Endothelial cell of umbilical vein (primary cell): ENCODE measurements at regions of chr22 and their contacts with region 1.

Region 1: DNA sequence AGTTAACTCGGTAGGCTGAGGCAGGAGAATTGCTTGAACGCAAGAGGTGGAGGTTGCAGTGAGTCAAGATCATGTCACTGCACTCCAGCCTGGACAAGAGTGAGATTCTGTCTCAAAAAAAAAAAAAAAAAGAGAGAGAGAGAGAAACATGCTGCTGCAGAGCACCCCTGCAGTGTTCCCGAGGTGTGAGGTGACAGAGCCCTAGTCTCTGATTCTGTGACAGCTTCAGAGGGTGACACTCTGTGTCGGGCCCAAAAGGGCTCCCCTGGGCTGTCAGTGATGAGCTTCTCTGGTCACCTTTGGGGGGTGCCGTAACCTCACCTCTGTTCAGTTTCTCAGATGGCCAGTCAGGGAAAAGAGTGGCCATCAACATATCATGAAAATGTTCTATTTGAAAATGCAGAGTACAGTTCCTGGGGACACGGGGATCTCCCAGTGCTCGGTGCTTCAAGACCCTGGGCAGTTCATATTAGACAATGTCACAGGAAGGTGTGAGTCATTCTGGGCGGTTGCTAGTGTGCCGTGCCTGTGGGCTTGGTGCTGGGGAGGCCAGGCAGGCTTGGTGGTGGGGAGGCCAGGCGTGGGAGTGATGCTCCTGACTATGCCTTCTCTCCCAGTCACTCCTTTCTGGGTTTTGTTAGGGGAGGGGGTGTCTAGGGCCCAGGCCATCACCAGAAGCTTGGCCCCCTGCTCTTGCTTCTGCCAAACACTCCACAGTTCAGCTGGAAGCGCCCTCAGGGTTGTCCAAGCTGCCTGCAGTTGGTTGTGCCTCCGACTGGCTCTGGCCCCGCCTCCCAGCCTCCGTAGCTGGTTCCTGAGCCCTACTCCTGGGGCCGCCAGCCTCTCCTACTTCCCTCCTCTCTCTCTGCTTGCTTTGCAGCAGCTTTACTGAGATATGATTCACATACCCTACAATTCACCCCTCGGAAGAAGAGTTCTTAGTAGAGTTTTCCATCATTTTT is 52.5 kb upstream of the CLDN5 start:
- DNase-seq: peak; percentile 90
- H3K4me3 ChIP-seq: no peak overlapping the region
- H3K27ac ChIP-seq: peak overlapping the region; percentile 75
- H3K4me1 ChIP-seq: peaks cover 47% of the 10 kb centered on the region
- H3K27me3 ChIP-seq: no peaks in the 10 kb centered on the region
- CTCF ChIP-seq: no peak
- POLR2A ChIP-seq: peak; percentile 70

Region 2: DNA sequence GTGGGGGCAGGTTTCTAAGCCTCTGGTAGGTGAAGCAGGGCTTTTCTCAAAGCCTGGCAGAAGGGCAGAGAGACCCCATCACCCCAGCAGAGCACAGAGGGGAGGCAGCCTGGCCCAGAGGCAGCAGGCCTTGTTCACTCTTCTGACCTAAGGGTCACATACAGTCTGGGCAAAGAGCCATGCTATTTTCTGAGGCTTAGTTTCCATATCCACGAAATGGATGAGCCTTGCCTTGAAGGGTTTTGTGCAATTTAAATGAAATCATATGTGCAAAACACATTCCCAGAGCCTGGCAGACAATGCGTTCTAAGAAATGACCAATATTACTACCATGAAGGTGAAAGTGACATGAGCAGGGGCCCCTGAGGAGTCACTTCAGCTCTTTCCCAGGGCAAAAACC is 189.7 kb before region 1 on chr22:
- CTCF ChIA-PET with region 1: no interaction called
- POLR2A ChIA-PET with region 1: no interaction called
- dilution Hi-C with region 1: no loop called
- intact Hi-C with region 1: no loop called
- DNase-seq: no peak
- H3K4me3 ChIP-seq: no peak overlapping the region
- H3K27ac ChIP-seq: no peak overlapping the region
- H3K4me1 ChIP-seq: no peaks in the 10 kb centered on the region
- H3K27me3 ChIP-seq: no peaks in the 10 kb centered on the region
- CTCF ChIP-seq: no peak
- POLR2A ChIP-seq: no peak

Region 3: DNA sequence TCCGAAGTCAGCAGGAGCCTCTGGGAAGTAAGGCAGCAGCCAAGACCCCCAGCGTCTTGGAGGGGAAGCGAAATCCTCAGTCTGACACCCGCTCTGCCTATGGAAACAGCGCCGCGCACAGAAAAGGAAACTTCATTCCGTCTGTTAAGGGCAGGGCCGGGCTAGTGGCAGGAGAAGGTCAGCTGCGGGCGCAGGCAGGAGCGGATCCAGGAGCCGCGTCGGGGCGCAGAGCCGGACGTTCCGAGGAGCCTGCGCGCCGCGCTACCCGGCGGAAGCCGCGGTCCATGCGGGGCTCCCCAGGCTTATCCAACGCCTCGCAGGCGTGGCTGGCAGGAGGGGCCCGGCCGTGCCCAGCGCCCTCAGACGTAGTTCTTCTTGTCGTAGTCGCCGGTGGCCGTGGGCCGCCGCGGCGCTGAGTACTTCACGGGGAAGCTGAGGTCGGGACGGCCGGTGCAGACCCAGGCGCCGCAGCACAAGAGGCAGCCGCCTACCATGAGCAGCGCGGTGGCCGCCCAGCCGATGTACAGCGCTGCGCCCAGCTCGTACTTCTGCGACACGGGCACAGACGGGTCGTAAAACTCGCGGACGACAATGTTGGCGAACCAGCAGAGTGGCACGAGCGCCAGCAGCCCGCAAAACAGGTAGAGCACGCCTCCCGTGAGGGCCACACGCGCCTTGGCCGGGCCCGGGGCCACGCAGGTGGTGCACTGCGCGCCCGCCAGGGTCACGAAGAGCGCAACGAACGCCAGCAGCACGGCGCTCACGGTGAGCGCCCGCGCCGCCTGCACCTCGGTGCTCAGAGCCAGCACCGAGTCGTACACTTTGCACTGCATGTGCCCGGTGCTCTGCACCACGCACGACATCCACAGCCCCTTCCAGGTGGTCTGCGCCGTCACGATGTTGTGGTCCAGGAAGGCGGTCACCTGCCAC is 53.2 kb before region 1 on chr22:
- CTCF ChIA-PET with region 1: interaction called, 12 read pairs
- POLR2A ChIA-PET with region 1: interaction called, 5 read pairs
- dilution Hi-C with region 1: no loop called
- intact Hi-C with region 1: loop called (anchors 1 kb)
- DNase-seq: peak; percentile 60
- H3K4me3 ChIP-seq: peak overlapping the region; percentile 53 to 75 (median 61)
- H3K27ac ChIP-seq: peak overlapping the region; percentile 55
- H3K4me1 ChIP-seq: peaks cover 44% of the 10 kb centered on the region
- H3K27me3 ChIP-seq: no peaks in the 10 kb centered on the region
- CTCF ChIP-seq: no peak
- POLR2A ChIP-seq: peak; percentile 48

Region 4: GRCh38 chr22:19543970-19544708 is 32.6 kb before region 1 on chr22:
- CTCF ChIA-PET with region 1: no interaction called
- POLR2A ChIA-PET with region 1: no interaction called
- dilution Hi-C with region 1: no loop called
- intact Hi-C with region 1: no loop called
- DNase-seq: no peak
- H3K4me3 ChIP-seq: no peak overlapping the region
- H3K27ac ChIP-seq: no peak overlapping the region
- H3K4me1 ChIP-seq: no peaks in the 10 kb centered on the region
- H3K27me3 ChIP-seq: no peaks in the 10 kb centered on the region
- CTCF ChIP-seq: no peak
- POLR2A ChIP-seq: no peak

Region 5: GRCh38 chr22:19554834-19555404 is 21.8 kb before region 1 on chr22:
- CTCF ChIA-PET with region 1: interaction called, 10 read pairs
- POLR2A ChIA-PET with region 1: no interaction called
- dilution Hi-C with region 1: no loop called
- intact Hi-C with region 1: no loop called
- DNase-seq: peak; percentile 73
- H3K4me3 ChIP-seq: no peak overlapping the region
- H3K27ac ChIP-seq: no peak overlapping the region
- H3K4me1 ChIP-seq: peaks cover 7% of the 10 kb centered on the region
- H3K27me3 ChIP-seq: no peaks in the 10 kb centered on the region
- CTCF ChIP-seq: peak; percentile 13 to 34
- POLR2A ChIP-seq: no peak

Region 6: DNA sequence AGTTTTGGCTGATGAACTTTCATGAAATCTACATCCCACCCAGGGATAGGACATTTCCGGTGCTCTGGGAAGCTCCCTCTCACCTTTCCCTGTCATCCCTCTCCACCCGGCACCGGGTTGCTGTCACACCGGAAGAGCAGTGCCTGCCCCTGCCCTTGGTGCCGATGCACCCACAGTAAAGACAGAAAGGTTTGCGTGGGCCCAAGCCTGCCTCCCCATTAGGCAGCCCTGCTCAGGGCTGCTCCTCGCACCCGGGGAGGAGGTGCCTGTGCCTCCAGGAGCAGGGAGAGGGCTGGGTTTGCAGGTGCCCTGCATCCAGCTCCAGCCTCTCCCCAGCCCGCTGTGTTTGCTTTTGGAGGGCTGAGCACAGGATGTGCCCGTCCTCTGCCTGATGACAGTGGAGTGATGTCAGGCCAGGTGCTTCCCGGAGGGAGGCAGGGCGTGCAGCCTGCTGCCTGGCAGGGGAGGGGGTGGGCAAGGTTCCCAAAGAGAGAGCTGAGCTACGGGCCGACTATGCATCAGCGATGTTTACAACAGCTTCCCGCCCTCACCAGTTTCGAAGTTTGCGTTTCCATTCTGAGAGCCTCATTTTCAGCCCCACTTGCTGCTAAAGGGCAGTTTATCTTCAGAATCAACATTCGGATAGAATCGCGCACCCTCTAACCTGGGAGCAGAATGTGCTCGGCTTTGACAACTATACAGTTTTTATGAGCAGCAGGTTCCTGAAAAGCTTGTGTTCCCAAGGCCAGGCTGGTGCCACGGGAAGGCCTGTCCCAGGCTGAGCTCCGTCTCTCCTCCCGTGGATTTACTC is 30.7 kb after region 1 on chr22:
- CTCF ChIA-PET with region 1: interaction called, 5 read pairs
- POLR2A ChIA-PET with region 1: no interaction called
- dilution Hi-C with region 1: no loop called
- intact Hi-C with region 1: loop called (anchors 1 kb)
- DNase-seq: peak; percentile 74
- H3K4me3 ChIP-seq: no peak overlapping the region
- H3K27ac ChIP-seq: no peak overlapping the region
- H3K4me1 ChIP-seq: peaks cover 2% of the 10 kb centered on the region
- H3K27me3 ChIP-seq: no peaks in the 10 kb centered on the region
- CTCF ChIP-seq: no peak
- POLR2A ChIP-seq: no peak

Region 7: GRCh38 chr22:19619144-19620009 is 42.6 kb after region 1 on chr22:
- CTCF ChIA-PET with region 1: no interaction called
- POLR2A ChIA-PET with region 1: no interaction called
- dilution Hi-C with region 1: no loop called
- intact Hi-C with region 1: loop called (anchors 5 kb)
- DNase-seq: peak; percentile 33
- H3K4me3 ChIP-seq: no peak overlapping the region
- H3K27ac ChIP-seq: no peak overlapping the region
- H3K4me1 ChIP-seq: peaks cover 20% of the 10 kb centered on the region
- H3K27me3 ChIP-seq: peaks cover 0 to 3% of the 10 kb centered on the region in 2 experiments
- CTCF ChIP-seq: no peak
- POLR2A ChIP-seq: no peak